Transverse colon (tissue), 4 donors: ENCODE measurements at regions of chr2 and their contacts with region 1.

Region 1: GRCh38 chr2:45816261-45816660 is 164.8 kb downstream of the PRKCE start:
- DNase-seq: no peak
- H3K4me3 ChIP-seq: no peak overlapping the region
- H3K27ac ChIP-seq: peak overlapping the region in 3 of 4 donors; percentile 62 to 82 (median 70)
- H3K4me1 ChIP-seq: peaks cover 3 to 44% (median 15%) of the 10 kb centered on the region in 4 donors
- H3K27me3 ChIP-seq: no peaks in the 10 kb centered on the region
- CTCF ChIP-seq: no peak
- EP300 ChIP-seq: no peak
- POLR2A ChIP-seq: no peak

Region 2: DNA sequence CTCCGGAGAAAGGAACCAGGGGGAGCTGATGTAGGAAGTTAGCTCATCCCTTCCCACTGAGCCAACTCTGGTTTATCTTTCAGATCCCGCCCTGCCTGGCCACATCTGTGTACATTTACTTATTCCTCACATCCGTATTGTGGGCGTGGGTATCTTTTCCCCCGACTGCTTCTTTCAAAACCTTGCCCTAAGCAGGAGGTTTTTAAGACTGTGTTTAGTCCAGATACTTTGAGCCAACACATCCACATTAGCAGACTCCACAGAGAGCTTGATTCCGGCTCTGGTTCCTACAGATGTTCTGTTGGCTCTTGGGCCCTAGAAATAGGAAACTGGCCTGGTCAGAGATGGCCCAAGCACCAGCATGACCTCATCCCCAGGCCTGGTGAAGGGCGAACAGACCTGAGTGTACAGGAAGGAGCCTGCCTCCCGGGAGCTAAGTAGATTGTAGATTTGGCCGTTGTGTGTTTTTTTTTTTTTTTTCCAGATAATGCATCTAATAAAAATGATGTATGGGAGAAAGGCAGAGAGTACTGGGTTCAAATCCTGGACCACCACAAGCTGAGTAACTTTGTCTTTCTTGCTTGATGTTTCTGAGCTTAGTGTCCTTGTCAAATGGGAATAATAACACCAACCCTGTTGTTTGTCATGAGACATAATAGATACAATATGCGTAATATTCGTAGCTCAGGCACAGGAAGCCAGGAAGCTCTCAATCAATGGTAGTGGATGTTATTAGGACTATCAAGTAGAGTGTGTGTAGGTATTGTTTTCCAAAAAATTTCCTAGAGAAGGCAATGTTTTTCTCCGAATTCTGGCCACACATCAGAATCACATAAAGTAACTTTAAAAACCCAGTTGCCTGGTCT is 72.5 kb before region 1 on chr2:
- in situ Hi-C with region 1: no loop called
- intact Hi-C with region 1: no loop called
- DNase-seq: peak; percentile 25
- H3K4me3 ChIP-seq: no peak overlapping the region
- H3K27ac ChIP-seq: peak overlapping the region; percentile 21 to 44 (median 34)
- H3K4me1 ChIP-seq: peaks cover 7 to 44% (median 25%) of the 10 kb centered on the region in 4 donors
- H3K27me3 ChIP-seq: no peaks in the 10 kb centered on the region
- CTCF ChIP-seq: no peak
- EP300 ChIP-seq: no peak
- POLR2A ChIP-seq: no peak

Region 3: DNA sequence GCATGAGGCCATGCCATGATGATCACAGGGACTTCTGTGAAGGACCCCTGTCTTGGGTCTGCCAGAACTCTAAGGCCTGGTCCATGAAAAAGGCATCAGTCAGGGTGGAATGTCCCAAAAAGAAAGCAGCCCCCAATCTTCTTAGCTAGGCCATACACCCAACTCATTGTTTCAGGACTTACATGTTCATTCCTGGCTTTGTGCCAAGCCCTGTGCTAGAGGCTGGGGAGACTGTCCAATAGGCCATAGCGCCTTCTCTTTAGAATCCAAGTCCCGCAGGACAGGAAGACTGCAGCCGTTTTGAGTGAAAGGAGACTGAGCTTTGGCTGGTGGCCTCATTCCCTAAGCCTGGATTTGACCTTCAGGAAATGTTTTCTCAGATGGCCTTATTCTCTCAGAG is 82.6 kb after region 1 on chr2:
- in situ Hi-C with region 1: no loop called
- intact Hi-C with region 1: no loop called
- DNase-seq: no peak
- H3K4me3 ChIP-seq: no peak overlapping the region
- H3K27ac ChIP-seq: no peak overlapping the region
- H3K4me1 ChIP-seq: peaks cover 0 to 16% (median 3%) of the 10 kb centered on the region in 4 donors
- H3K27me3 ChIP-seq: no peaks in the 10 kb centered on the region
- CTCF ChIP-seq: no peak
- EP300 ChIP-seq: no peak
- POLR2A ChIP-seq: no peak

Region 4: GRCh38 chr2:45919160-45919650 is 102.9 kb after region 1 on chr2:
- in situ Hi-C with region 1: no loop called
- intact Hi-C with region 1: no loop called
- DNase-seq: no peak
- H3K4me3 ChIP-seq: no peak overlapping the region
- H3K27ac ChIP-seq: no peak overlapping the region
- H3K4me1 ChIP-seq: peaks cover 0 to 11% (median 6%) of the 10 kb centered on the region in 4 donors
- H3K27me3 ChIP-seq: no peaks in the 10 kb centered on the region
- CTCF ChIP-seq: no peak
- EP300 ChIP-seq: no peak
- POLR2A ChIP-seq: no peak

Region 5: GRCh38 chr2:46311651-46312223 is 495.5 kb after region 1 on chr2:
- in situ Hi-C with region 1: no loop called
- intact Hi-C with region 1: loop called (anchors 5 kb)
- DNase-seq: no peak
- H3K4me3 ChIP-seq: no peak overlapping the region
- H3K27ac ChIP-seq: peak overlapping the region; percentile 16 to 47 (median 36)
- H3K4me1 ChIP-seq: peaks cover 29 to 75% (median 54%) of the 10 kb centered on the region in 4 donors
- H3K27me3 ChIP-seq: no peaks in the 10 kb centered on the region
- CTCF ChIP-seq: no peak
- EP300 ChIP-seq: no peak
- POLR2A ChIP-seq: no peak